A549 (cell line): ENCODE measurements at regions of chr2 and their contacts with region 1.

Region 1: GRCh38 chr2:24084386-24085361 is at the start of gene TP53I3:
- DNase-seq: peak; percentile 95 to 97
- ATAC-seq: peak; percentile 86 to 93
- H3K4me3 ChIP-seq: peak within 1 kb of the TSS; percentile 65
- H3K27ac ChIP-seq: peak within 1 kb of the TSS; percentile 91 to 97
- H3K4me1 ChIP-seq: peaks cover 27% of the 10 kb centered on the region
- CTCF ChIP-seq: peak; percentile 98
- EP300 ChIP-seq: no peak
- POLR2A ChIP-seq: peak; percentile 90
- RAD21 ChIP-seq: peak; percentile 75 to 95
- polyA plus RNA-seq, gene TP53I3: 93.7 and 99.1 TPM in 2 replicates

Region 2: DNA sequence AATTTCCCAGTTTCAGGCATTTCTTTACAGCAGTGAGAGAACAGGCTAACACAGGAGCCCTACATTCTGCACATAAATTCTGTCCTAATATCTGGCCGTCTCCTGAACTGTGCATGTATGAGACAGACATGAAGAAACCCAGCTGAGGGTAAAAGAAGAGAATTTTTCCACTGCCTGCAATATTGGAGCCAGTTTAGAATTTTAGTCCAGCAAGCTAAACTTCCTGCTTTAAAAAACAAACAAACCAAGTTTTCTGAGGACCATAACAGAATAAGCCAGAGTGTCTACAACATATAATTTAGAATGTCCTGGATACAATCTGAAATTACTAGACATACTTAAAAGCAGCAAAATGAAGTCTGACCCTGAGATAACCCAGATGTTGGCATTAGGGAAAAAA is 914.8 kb before region 1 on chr2:
- CTCF ChIA-PET with region 1: no interaction called
- POLR2A ChIA-PET with region 1: no interaction called
- DNase-seq: no peak
- ATAC-seq: no peak
- H3K4me3 ChIP-seq: no peak overlapping the region
- H3K27ac ChIP-seq: no peak overlapping the region
- H3K4me1 ChIP-seq: no peaks in the 10 kb centered on the region
- CTCF ChIP-seq: no peak
- EP300 ChIP-seq: no peak
- POLR2A ChIP-seq: no peak
- RAD21 ChIP-seq: no peak

Region 3: GRCh38 chr2:23745726-23746105 is 339.0 kb before region 1 on chr2:
- CTCF ChIA-PET with region 1: no interaction called
- POLR2A ChIA-PET with region 1: no interaction called
- DNase-seq: peak in 1 of 2 experiments; percentile 9
- ATAC-seq: peak; percentile 30 to 44; a peak in 4 of 6 replicates
- H3K4me3 ChIP-seq: no peak overlapping the region
- H3K27ac ChIP-seq: no peak overlapping the region; a peak in 1 of 6 replicates
- H3K4me1 ChIP-seq: peaks cover 6% of the 10 kb centered on the region; the same call in 1 of the 3 replicates
- CTCF ChIP-seq: no peak
- EP300 ChIP-seq: no peak
- POLR2A ChIP-seq: no peak
- RAD21 ChIP-seq: no peak

Region 4: GRCh38 chr2:23926750-23927571 is 157.7 kb before region 1 on chr2 and contains the start of gene ATAD2B:
- CTCF ChIA-PET with region 1: interaction called, 90 read pairs
- POLR2A ChIA-PET with region 1: interaction called, 99 read pairs
- DNase-seq: peak; percentile 90 to 97
- ATAC-seq: peak; percentile 89 to 96
- H3K4me3 ChIP-seq: peak within 1 kb of the TSS; percentile 75
- H3K27ac ChIP-seq: peak within 1 kb of the TSS; percentile 93 to 95
- H3K4me1 ChIP-seq: peaks cover 20% of the 10 kb centered on the region; the same call in 2 of the 3 replicates
- CTCF ChIP-seq: peak; percentile 96
- EP300 ChIP-seq: no peak
- POLR2A ChIP-seq: peak; percentile 80
- RAD21 ChIP-seq: peak; percentile 77 to 93
- polyA plus RNA-seq, gene ATAD2B: 8.7 and 13.1 TPM in 2 replicates

Region 5: GRCh38 chr2:24046930-24047702 is 37.6 kb before region 1 on chr2 and contains the start of gene WDCP:
- CTCF ChIA-PET with region 1: interaction called, 17 read pairs
- POLR2A ChIA-PET with region 1: interaction called, 12 read pairs
- DNase-seq: peak; percentile 93 to 99
- ATAC-seq: peak; percentile 92 to 98
- H3K4me3 ChIP-seq: peak within 1 kb of the TSS; percentile 66
- H3K27ac ChIP-seq: peak within 1 kb of the TSS; percentile 70 to 85
- H3K4me1 ChIP-seq: peaks cover 24% of the 10 kb centered on the region
- CTCF ChIP-seq: no peak
- EP300 ChIP-seq: no peak
- POLR2A ChIP-seq: peak; percentile 90
- RAD21 ChIP-seq: no peak
- polyA plus RNA-seq, gene WDCP: 20.8 and 30.1 TPM in 2 replicates

Region 6: DNA sequence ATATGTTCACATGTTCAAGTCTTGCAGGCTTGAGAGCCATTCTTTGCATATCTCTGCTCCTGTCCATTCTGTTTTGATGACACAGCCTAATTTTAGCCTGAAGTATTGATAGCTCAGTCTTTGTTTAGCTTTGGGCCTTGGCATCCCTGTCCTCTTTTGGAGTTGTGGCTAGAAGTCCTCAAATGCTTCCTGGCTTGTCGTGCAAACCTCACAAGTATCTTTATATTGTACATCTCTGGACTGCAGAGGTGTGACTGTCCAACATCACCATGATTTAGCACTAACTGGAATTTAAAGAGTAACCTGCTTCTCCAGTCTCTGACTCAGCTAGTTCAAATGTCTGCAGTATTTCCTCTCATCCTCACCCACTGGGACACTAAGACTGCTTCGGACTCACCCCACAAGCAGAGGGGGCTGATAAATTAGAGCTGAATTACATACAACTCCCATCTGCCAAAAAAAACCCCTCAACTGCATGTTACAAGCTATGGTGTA is 26.8 kb after region 1 on chr2:
- CTCF ChIA-PET with region 1: interaction called, 57 read pairs
- POLR2A ChIA-PET with region 1: interaction called, 37 read pairs
- DNase-seq: peak; percentile 48 to 85
- ATAC-seq: peak; percentile 91 to 93
- H3K4me3 ChIP-seq: no peak overlapping the region
- H3K27ac ChIP-seq: peak overlapping the region; percentile 69 to 85
- H3K4me1 ChIP-seq: peaks cover 34% of the 10 kb centered on the region
- CTCF ChIP-seq: no peak
- EP300 ChIP-seq: peak in 1 of 2 experiments; percentile 27; a peak in 1 of 5 replicates
- POLR2A ChIP-seq: no peak
- RAD21 ChIP-seq: no peak

Region 7: GRCh38 chr2:24164125-24164973 is 79.7 kb after region 1 on chr2:
- CTCF ChIA-PET with region 1: interaction called, 51 read pairs
- POLR2A ChIA-PET with region 1: interaction called, 9 read pairs
- DNase-seq: peak; percentile 65 to 67
- ATAC-seq: peak; percentile 86 to 98
- H3K4me3 ChIP-seq: no peak overlapping the region
- H3K27ac ChIP-seq: no peak overlapping the region
- H3K4me1 ChIP-seq: no peaks in the 10 kb centered on the region
- CTCF ChIP-seq: peak; percentile 93
- EP300 ChIP-seq: no peak
- POLR2A ChIP-seq: no peak
- RAD21 ChIP-seq: peak; percentile 86 to 91

Region 8: GRCh38 chr2:24360050-24360962 is 275.6 kb after region 1 on chr2 and contains the start of gene ITSN2:
- CTCF ChIA-PET with region 1: interaction called, 4 read pairs
- POLR2A ChIA-PET with region 1: interaction called, 13 read pairs
- DNase-seq: peak; percentile 84 to 87
- ATAC-seq: peak; percentile 96 to 97
- H3K4me3 ChIP-seq: peak within 1 kb of the TSS; percentile 87
- H3K27ac ChIP-seq: peak within 1 kb of the TSS; percentile 96 to 97
- H3K4me1 ChIP-seq: peaks cover 26% of the 10 kb centered on the region
- CTCF ChIP-seq: no peak
- EP300 ChIP-seq: no peak
- POLR2A ChIP-seq: peak; percentile 82
- RAD21 ChIP-seq: no peak
- polyA plus RNA-seq, gene ITSN2: 45.2 and 48.3 TPM in 2 replicates

Region 9: DNA sequence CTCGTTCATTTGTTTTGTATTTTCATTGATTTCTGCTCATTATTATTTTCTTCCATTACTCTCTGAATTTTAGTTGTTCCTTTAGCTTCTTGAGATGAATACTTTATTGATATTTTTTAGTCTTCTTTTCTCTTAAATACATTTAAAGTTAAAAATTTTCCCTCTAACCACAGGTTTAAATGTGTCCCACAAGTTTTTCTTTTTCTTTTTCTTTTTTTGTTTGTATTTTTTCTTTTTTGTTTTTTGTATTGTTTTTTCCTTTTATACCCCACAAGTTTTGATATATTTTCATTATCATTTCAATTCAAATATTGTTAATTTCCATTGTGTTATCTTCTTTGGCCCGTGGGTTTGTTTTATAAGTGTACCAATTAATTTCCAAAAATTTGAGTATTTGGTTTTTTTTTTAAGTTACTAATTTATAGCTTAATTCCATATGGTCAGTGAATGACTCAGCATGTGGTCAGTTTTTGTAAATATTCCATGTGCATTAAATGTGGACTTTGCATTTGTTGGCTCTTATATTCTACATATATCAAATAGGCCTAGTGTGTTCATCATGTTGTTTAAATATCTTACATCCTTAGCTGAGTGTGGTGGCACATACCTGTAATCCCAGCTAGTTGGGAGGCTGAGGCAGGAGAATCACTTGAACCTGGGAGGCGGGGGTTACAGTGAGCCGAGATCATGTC is 724.8 kb after region 1 on chr2:
- CTCF ChIA-PET with region 1: no interaction called
- POLR2A ChIA-PET with region 1: no interaction called
- DNase-seq: no peak
- ATAC-seq: no peak
- H3K4me3 ChIP-seq: no peak overlapping the region
- H3K27ac ChIP-seq: peak overlapping the region; percentile 61 to 77
- H3K4me1 ChIP-seq: peaks cover 49% of the 10 kb centered on the region
- CTCF ChIP-seq: no peak
- EP300 ChIP-seq: no peak
- POLR2A ChIP-seq: no peak
- RAD21 ChIP-seq: no peak

Region 10: DNA sequence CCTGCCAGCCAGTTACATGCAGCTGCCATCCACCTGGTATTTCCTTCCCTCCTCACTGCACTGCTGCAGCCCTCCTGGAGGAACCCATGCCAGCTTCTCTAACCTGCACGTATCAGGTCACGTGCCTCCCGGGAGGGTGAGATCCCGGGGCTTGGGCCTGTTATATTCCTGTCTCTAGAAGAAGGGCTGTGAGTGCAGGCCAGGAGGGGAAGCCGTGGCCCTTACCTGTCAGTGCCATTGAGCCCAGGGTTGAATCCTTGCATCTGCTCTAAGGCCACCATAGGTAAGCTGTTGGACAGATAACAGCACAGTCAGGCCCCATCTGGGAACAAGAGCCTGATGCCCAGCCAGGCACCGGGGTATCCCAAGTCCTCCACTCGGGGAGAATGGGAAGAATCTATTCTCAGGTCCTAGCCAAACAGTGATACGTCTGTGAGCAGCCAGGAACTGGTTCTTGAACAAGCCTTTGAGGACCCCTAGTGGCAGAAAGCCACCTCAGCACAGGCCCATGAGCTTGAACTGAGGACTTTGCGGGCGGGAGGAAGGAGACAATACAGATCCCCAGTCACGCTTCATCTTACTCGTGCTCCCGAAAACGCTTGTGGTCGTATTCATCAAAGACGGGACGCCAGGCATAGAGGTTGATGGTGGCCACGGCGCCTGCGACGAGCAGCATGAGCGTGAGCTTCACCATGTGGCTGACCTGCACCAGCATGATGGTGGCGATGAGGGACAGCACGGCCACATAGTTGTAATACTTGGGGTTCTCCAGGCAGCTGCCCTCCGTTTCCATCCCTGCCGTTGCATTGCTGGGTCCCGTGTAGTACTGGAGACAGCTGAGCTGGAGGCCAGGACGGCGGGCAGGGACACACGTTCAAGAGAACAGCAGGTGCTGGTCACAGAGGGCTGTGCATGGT is 742.9 kb after region 1 on chr2:
- CTCF ChIA-PET with region 1: interaction called, 11 read pairs
- POLR2A ChIA-PET with region 1: no interaction called
- DNase-seq: peak; percentile 90 to 95
- ATAC-seq: peak; percentile 84 to 91
- H3K4me3 ChIP-seq: no peak overlapping the region
- H3K27ac ChIP-seq: peak overlapping the region in 1 of 2 experiments; percentile 1; a peak in 1 of 6 replicates
- H3K4me1 ChIP-seq: 0 out of 3 replicates have a peak, but pooled peaks cover 2% of the 10 kb centered on the region
- CTCF ChIP-seq: peak; percentile 93
- EP300 ChIP-seq: no peak
- POLR2A ChIP-seq: no peak
- RAD21 ChIP-seq: peak; percentile 95 to 97